Activated naive CD8-positive, alpha-beta T cell treated with anti-CD3 and anti-CD28 coated beads, Interleukin-2, amount 10 ng/mL, durations not matched to agents 7 days and 5 days (primary cell): ENCODE measurements at regions of chrX and their contacts with region 1.

Region 1: GRCh38 chrX:149504915-149505651 is at the start of gene IDS:
- DNase-seq: peak; percentile 84
- ATAC-seq: peak; percentile 76
- H3K4me3 Mint-ChIP-seq: peak within 1 kb of the TSS; percentile 93
- H3K27ac Mint-ChIP-seq: peak within 1 kb of the TSS; percentile 97
- H3K4me1 Mint-ChIP-seq: peaks cover 21% of the 10 kb centered on the region
- H3K27me3 Mint-ChIP-seq: peaks cover 3% of the 10 kb centered on the region
- total RNA-seq, gene IDS: 108 to 109 TPM

Region 2: DNA sequence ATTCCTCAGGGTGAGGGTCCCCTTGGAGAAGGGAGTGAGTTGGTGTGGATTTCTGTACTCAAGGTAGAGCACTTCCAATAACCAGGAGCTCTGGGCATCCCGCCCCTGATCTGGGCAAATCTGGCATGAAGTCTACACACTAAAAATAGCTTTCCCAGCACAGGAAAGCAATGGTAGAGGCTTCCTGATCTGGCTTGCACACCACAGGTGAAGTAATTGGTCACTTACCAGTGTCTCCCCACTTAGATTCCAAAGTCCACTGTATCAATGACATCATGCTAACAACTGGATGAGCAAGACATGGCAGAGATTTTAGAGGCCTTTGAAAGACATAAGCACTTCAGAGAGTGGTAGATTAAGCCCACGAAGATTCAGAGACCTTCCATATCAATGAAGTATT is 17.8 kb after region 1 on chrX:
- POLR2A ChIA-PET with region 1: interaction called, 13 read pairs
- DNase-seq: no peak
- ATAC-seq: no peak
- H3K4me3 Mint-ChIP-seq: no peak overlapping the region
- H3K27ac Mint-ChIP-seq: no peak overlapping the region
- H3K4me1 Mint-ChIP-seq: peaks cover 32% of the 10 kb centered on the region
- H3K27me3 Mint-ChIP-seq: no peaks in the 10 kb centered on the region